MCF 10A (cell line): ENCODE measurements at regions of chr15 and their contacts with region 1.

Region 1: DNA sequence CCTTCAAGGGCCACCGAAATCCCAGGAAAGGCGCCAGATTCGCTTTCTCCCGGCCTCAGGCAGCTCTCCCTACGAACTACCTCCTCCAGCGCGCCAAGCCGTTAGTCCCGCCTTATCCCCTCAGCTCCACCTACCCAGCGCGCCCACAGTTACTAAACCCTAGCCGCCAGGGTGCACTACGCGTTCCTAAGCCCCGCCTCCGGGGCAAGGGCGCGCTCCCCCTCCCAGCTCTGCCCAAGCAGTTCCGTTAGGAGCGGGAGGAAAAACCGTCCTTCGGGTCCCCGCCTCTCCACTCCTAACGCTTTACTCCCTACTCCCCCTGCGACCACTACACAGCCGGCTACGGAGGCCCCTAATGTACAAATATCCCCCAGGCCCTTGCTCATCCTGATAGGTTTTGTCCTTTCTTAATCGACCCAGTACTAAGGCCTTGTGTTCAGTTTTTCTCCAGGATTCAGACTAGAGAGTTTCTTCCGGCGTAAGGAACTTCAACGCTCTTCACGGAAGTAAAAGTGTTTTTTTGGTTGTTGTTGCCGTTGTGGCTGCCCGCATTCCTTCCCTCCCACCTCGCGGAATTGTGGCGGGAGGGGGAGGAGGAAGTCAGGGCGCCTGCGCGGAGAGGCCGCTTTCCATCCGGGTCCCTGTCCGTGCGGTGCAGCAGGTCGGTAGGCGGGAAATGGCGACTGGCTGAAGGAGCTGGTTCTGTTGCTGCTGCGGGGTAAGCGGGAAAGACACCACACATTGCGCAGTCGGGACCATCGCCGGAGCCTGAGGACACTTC is at the start of gene CTDSPL2:
- DNase-seq: peak; percentile 99
- H3K4me3 Mint-ChIP-seq: peak within 1 kb of the TSS; percentile 97
- H3K27ac Mint-ChIP-seq: peak within 1 kb of the TSS; percentile 99
- H3K4me1 Mint-ChIP-seq: peaks cover 6% of the 10 kb centered on the region
- H3K27me3 Mint-ChIP-seq: no peaks in the 10 kb centered on the region
- CTCF ChIP-seq: peak; percentile 15
- total RNA-seq, gene CTDSPL2: 36.3 and 38.2 TPM in 2 replicates

Region 2: GRCh38 chr15:44286814-44287452 is 140.2 kb before region 1 on chr15:
- CTCF ChIA-PET with region 1: interaction called, 7 read pairs
- POLR2A ChIA-PET with region 1: interaction called, 122 read pairs
- intact Hi-C with region 1: loop called (anchors 1 kb)
- DNase-seq: no peak
- H3K4me3 Mint-ChIP-seq: peak overlapping the region; percentile 95
- H3K27ac Mint-ChIP-seq: peak overlapping the region; percentile 97
- H3K4me1 Mint-ChIP-seq: peaks cover 15% of the 10 kb centered on the region
- H3K27me3 Mint-ChIP-seq: no peaks in the 10 kb centered on the region
- CTCF ChIP-seq: no peak

Region 3: GRCh38 chr15:44394062-44394461 is 33.1 kb before region 1 on chr15:
- CTCF ChIA-PET with region 1: interaction called, 4 read pairs
- POLR2A ChIA-PET with region 1: interaction called, 12 read pairs
- intact Hi-C with region 1: no loop called
- DNase-seq: peak; percentile 48
- H3K4me3 Mint-ChIP-seq: no peak overlapping the region
- H3K27ac Mint-ChIP-seq: peak overlapping the region; percentile 61
- H3K4me1 Mint-ChIP-seq: peaks cover 14% of the 10 kb centered on the region
- H3K27me3 Mint-ChIP-seq: no peaks in the 10 kb centered on the region
- CTCF ChIP-seq: no peak

Region 4: GRCh38 chr15:44482088-44482487 is 54.9 kb after region 1 on chr15:
- CTCF ChIA-PET with region 1: interaction called, 3 read pairs
- POLR2A ChIA-PET with region 1: interaction called, 10 read pairs
- intact Hi-C with region 1: loop called (anchors 5 kb)
- DNase-seq: no peak
- H3K4me3 Mint-ChIP-seq: no peak overlapping the region
- H3K27ac Mint-ChIP-seq: peak overlapping the region; percentile 54
- H3K4me1 Mint-ChIP-seq: no peaks in the 10 kb centered on the region
- H3K27me3 Mint-ChIP-seq: no peaks in the 10 kb centered on the region
- CTCF ChIP-seq: no peak

Region 5: DNA sequence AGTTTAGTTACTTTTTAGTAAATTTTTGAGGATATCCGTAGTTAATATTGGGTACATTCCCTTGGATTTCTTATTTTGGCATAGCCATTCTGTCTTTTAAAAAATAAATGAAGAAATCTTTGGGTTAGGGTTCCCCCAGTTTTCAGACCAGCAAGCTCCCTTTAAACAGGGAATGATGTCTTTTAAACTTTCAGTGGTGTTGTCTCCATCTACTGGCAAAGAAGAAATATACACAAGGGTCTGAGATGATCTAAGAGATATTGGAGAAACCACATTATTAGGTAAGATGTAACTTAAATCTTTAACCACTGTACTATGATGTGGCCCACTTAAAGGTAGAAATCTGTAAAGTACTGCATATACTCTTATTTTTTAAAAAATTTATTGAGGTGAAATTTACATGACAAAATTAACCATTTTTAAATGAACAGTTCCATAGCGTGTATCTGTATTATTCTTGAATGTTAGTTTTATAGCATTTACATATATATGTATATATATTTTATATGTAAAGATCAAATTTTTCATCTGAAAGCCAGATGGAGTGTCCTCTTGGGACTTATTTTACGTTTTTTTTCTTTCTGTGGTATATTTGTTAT is 74.7 kb after region 1 on chr15:
- CTCF ChIA-PET with region 1: interaction called, 7 read pairs
- POLR2A ChIA-PET with region 1: interaction called, 25 read pairs
- intact Hi-C with region 1: loop called (anchors 1 kb)
- DNase-seq: peak; percentile 49
- H3K4me3 Mint-ChIP-seq: no peak overlapping the region
- H3K27ac Mint-ChIP-seq: no peak overlapping the region
- H3K4me1 Mint-ChIP-seq: no peaks in the 10 kb centered on the region
- H3K27me3 Mint-ChIP-seq: no peaks in the 10 kb centered on the region
- CTCF ChIP-seq: peak; percentile 58